GM13976 (cell line): ENCODE measurements at regions of chr18 and their contacts with region 1.

Region 1: DNA sequence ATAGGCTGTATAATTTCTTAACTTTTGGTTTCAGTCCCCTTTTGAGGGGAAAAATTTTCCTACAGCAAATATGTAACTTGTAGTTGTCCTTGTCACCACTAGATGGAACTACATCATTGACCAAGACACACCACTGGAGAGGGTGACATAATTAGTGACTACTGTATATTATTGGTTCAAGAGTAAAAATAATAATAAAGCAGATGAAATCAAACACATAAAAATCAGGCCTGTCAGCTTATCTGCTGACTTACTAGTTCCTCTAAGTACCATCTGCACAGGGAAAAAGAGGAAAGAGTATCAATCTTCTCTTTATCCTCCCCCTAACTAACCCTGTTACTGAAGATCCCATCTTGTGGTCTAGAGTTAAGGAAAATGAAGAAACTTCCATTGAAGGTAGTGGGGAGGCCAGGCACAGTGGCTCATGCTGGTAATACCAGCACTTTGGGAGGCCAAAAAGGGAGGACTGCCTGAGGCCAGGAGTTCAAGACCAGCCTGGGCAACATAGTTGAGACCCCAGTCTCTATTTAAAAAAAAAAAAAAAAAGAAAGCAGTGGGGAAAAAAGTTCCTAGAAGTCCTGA is 29.6 kb upstream of the ENOSF1 start:
- DNase-seq: peak; percentile 62
- CTCF ChIP-seq: peak; percentile 57

Region 2: DNA sequence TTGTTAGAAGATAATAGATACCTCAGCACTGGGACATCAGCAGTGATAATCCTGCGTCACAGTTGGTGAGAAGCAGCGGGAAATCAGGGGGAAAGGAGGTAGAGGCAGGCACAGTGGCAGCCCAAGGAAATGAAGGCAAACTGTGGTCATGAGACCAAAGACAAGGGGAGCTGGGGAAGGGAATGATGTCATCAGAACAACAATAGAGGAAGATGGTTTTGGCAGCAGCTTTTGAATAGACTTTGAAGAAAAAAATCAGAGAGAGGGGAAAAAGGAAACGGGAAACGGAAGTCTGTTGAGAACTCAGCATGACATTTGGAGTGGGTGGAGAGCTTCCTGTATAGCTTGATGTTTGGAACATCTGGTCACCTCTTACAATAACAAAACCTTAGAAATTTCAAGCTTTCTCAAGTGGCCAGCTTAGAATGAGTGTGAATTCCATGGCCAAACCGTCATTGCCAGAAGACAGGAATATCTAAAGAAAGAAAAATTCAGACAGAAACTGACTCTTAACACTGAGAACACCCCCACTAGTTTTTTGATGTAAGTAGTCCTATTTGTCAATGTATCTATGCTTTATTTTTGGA is 88.4 kb after region 1 on chr18:
- in situ Hi-C with region 1: loop called (anchors 5 kb)
- DNase-seq: no peak
- CTCF ChIP-seq: no peak

Region 3: GRCh38 chr18:1452821-1453220 is 710.8 kb after region 1 on chr18:
- in situ Hi-C with region 1: no loop called
- DNase-seq: no peak
- CTCF ChIP-seq: no peak